ENCODE measurements at regions of chr18 and their contacts with region 1.

Region 1: DNA sequence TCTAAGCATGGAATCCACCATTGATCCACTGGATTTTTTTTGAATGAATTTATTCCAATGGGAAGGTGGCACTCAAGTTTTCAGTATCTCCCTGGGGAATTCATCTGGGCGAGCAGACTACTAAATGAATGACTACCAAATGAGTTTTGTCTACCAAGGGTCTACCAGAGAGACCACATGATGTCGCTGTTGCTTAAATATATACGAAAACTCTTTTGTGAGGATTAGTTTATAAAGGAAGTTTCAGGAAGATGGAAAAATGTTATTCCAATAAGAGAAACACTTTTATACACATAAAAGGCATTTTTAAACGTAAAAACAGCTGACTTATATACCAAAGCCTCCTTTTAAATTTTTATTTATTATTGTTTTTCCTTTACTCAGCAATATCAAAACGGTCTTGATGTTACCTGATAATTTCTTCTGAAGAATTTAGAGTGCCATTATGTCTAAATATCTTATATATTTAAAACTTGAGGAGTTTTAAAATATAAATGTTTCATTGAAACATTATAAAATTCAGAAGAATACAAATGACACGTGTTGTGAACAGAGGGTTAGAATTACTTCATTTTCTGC is 139.7 kb downstream of the HRH4 start:
- DNase-seq: no peak
- H3K4me3 Mint-ChIP-seq: no peak overlapping the region
- H3K27ac Mint-ChIP-seq: no peak overlapping the region
- H3K4me1 Mint-ChIP-seq: no peaks in the 10 kb centered on the region
- H3K27me3 Mint-ChIP-seq: peaks cover 13% of the 10 kb centered on the region

Region 2: DNA sequence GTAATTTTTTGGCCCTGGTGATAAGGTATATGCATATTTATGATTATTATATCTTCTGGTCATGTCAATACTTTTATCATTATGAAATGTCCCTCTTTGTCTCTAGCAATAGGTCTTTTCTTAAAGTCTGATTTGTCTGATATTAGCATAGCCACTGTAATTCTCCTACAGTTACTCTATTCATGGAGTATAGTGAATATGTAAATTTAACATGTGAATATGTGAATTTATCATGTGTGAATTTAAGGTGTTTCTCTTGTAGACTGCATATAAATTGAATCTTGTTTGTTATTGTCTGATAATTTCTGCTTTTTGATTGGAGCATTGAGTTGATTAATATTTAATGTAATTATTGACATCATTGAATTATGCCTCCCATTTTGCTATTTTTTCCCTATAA is 119.6 kb after region 1 on chr18:
- intact Hi-C with region 1: loop called (anchors 2 kb)
- DNase-seq: no peak
- H3K4me3 Mint-ChIP-seq: no peak overlapping the region
- H3K27ac Mint-ChIP-seq: no peak overlapping the region
- H3K4me1 Mint-ChIP-seq: no peaks in the 10 kb centered on the region
- H3K27me3 Mint-ChIP-seq: peaks cover 7% of the 10 kb centered on the region

Region 3: DNA sequence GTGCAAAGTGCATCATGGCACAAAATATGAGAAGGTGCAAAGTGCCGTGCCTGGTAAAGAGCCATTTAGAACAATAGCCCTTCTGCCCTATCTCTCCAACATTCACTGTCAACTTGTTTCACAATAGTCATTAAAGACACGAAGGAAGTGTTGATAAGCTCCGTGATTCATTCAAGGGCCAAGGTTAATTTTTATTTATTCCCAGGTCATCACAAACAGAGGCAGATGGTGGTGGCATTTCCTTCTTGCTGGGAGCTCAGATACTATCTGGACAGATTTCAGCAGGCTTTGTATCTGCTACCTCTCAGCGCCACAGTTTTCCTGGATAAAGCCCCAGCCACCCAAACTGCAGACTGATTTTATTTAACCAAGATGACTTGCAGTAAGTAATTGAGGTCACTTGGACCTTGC is 442.5 kb after region 1 on chr18:
- intact Hi-C with region 1: no loop called
- DNase-seq: no peak
- H3K4me3 Mint-ChIP-seq: no peak overlapping the region
- H3K27ac Mint-ChIP-seq: no peak overlapping the region
- H3K4me1 Mint-ChIP-seq: no peaks in the 10 kb centered on the region
- H3K27me3 Mint-ChIP-seq: no peaks in the 10 kb centered on the region

Measured in activated T-helper 1 cell treated with anti-CD3 and anti-CD28 coated beads, Interleukin-12 subunit alpha, Interleukin-12 subunit beta, Interleukin-2, Interleukin-4 antibody, amounts not matched to agents 30 ng/mL and 10 ng/mL and 1 ng/mL, durations not matched to agents 14 hours and 24 hours and 36 hours (primary cell).